OCI-LY7 (cell line): ENCODE measurements at regions of chr7 and their contacts with region 1.

Region 1: GRCh38 chr7:33024189-33024757 is 38.3 kb downstream of the NT5C3A start:
- DNase-seq: no peak
- H3K4me3 ChIP-seq: no peak overlapping the region
- H3K27ac ChIP-seq: no peak overlapping the region
- H3K4me1 ChIP-seq: no peaks in the 10 kb centered on the region
- CTCF ChIP-seq: no peak

Region 2: GRCh38 chr7:33035776-33036175 is 11.5 kb after region 1 on chr7:
- CTCF ChIA-PET with region 1: no interaction called
- POLR2A ChIA-PET with region 1: interaction called, 24 read pairs
- intact Hi-C with region 1: no loop called
- DNase-seq: no peak
- H3K4me3 ChIP-seq: no peak overlapping the region
- H3K27ac ChIP-seq: no peak overlapping the region
- H3K4me1 ChIP-seq: peaks cover 23% of the 10 kb centered on the region
- CTCF ChIP-seq: no peak

Region 3: GRCh38 chr7:33040803-33041516 is 16.7 kb after region 1 on chr7:
- CTCF ChIA-PET with region 1: no interaction called
- POLR2A ChIA-PET with region 1: interaction called, 24 read pairs
- intact Hi-C with region 1: no loop called
- DNase-seq: peak; percentile 91
- H3K4me3 ChIP-seq: peak overlapping the region; percentile 69
- H3K27ac ChIP-seq: peak overlapping the region; percentile 85
- H3K4me1 ChIP-seq: peaks cover 65% of the 10 kb centered on the region
- CTCF ChIP-seq: no peak